ENCODE measurements at regions of chr5 and their contacts with region 1.

Region 1: GRCh38 chr5:181239013-181239663 is 4.6 kb downstream of the RACK1 start:
- DNase-seq: no peak
- H3K4me3 ChIP-seq: no peak overlapping the region
- H3K27ac ChIP-seq: no peak overlapping the region
- H3K4me1 ChIP-seq: peaks cover 14 to 22% of the 10 kb centered on the region in 2 donors
- H3K27me3 ChIP-seq: no peaks in the 10 kb centered on the region
- CTCF ChIP-seq: no peak
- POLR2A ChIP-seq: no peak

Region 2: GRCh38 chr5:181223058-181223728 is 15.9 kb before region 1 on chr5 and contains the start of gene TRIM41:
- intact Hi-C with region 1: loop called in 1 of 2 experiments (anchors 2 kb)
- DNase-seq: peak; percentile 94 to 99 (median 98)
- H3K4me3 ChIP-seq: peak within 1 kb of the TSS; percentile 46 to 87 (median 72)
- H3K27ac ChIP-seq: peak within 1 kb of the TSS; percentile 74 to 98 (median 95)
- H3K4me1 ChIP-seq: peaks cover 4 to 19% of the 10 kb centered on the region in 2 donors
- H3K27me3 ChIP-seq: no peaks in the 10 kb centered on the region
- CTCF ChIP-seq: peak in 1 of 6 experiments; percentile 20
- POLR2A ChIP-seq: peak; percentile 81 to 84
- total RNA-seq, gene TRIM41: 15.6 to 41.6 (median 19.6) TPM

Measured in adrenal gland (tissue), 19 donors.